Psoas muscle (tissue), 8 donors: ENCODE measurements at regions of chr21 and their contacts with region 1.

Region 1: DNA sequence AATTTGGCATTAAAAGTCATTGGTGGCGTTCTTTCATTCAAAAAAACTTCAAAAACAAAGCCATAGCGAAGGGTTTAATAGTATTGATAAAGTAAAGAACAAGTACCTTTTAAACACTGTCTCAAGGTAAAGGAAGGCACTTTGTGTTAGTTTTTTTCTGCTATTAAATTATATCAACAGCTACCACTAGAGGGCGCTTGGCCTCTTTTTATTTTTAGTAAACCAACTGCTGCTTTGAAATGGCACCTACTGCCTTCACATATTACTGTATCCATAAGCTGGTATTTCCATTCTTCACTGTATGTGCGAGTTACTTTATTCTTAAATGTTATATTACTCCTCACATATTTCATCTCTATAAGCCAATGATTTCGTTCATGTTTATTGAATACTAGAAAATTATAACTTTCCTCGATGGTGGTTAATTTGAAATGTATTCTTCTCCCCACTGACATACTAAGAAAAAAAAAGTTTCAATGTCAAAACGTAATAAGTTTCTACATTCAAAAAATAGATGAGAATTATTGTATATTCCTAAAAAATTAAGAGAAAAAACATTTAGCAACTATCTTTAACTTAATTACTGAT is 125.7 kb upstream of the CXADR start:
- DNase-seq: no peak
- ATAC-seq: peak in 1 of 4 donors; percentile 45
- H3K4me3 ChIP-seq: no peak overlapping the region
- H3K27ac ChIP-seq: no peak overlapping the region
- H3K4me1 ChIP-seq: no peaks in the 10 kb centered on the region
- H3K27me3 ChIP-seq: no peaks in the 10 kb centered on the region
- CTCF ChIP-seq: peak; percentile 86

Region 2: GRCh38 chr21:16551101-16551695 is 835.9 kb before region 1 on chr21:
- intact Hi-C with region 1: no loop called
- DNase-seq: no peak
- ATAC-seq: no peak
- H3K4me3 ChIP-seq: no peak overlapping the region
- H3K27ac ChIP-seq: no peak overlapping the region
- H3K4me1 ChIP-seq: no peaks in the 10 kb centered on the region
- H3K27me3 ChIP-seq: no peaks in the 10 kb centered on the region
- CTCF ChIP-seq: no peak

Region 3: DNA sequence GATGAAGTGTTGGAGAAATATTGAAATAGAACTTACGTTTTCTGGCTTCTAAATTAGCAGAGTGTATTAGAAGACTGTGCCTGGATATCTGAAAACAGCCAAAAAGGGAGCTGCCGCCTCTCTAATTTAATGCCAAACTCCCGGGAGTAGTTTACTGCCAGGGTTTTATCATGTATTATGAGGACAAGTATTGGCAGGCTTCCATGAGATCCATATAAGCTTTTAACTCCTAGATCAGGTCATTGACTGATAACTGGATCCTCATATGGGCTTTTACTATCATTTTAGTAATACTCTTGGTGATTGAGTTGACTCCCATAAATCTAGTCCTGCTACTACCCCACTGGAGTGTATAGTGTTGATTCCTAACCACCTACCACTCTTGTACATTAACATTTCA is 52.6 kb before region 1 on chr21:
- intact Hi-C with region 1: no loop called
- DNase-seq: no peak
- ATAC-seq: no peak
- H3K4me3 ChIP-seq: no peak overlapping the region
- H3K27ac ChIP-seq: no peak overlapping the region
- H3K4me1 ChIP-seq: no peaks in the 10 kb centered on the region
- H3K27me3 ChIP-seq: no peaks in the 10 kb centered on the region
- CTCF ChIP-seq: no peak

Region 4: DNA sequence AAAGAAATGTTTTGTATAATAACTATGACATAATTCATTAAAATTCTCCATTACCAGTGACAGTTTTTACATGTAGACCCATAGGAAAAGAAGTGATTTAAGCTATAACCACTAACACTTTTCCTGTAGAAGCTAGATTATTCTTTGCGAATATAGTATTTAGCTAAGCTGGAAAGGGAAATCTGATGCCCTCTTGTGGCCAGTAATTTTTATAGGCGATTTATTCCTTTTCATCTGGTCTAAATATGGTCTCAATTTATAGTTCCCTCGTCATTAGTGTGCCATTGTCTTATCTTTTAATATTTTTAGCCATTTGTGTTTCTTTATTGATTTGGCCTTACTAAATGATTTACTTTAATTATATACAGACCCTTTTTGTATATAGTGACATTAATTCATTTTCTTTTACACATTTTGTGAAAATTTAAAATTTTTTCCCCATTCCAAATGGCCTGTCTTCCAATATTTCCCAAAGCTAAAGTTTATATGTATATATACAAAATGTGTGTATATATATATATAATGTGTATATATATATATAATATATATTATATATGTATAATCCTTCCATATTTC is 198.8 kb after region 1 on chr21:
- intact Hi-C with region 1: loop called (anchors 5 to 10 kb)
- DNase-seq: no peak
- ATAC-seq: no peak
- H3K4me3 ChIP-seq: no peak overlapping the region
- H3K27ac ChIP-seq: no peak overlapping the region
- H3K4me1 ChIP-seq: no peaks in the 10 kb centered on the region
- H3K27me3 ChIP-seq: no peaks in the 10 kb centered on the region
- CTCF ChIP-seq: peak; percentile 53